Mammary epithelial cell (primary cell): ENCODE measurements at regions of chr14 and their contacts with region 1.

Region 1: GRCh38 chr14:85444635-85445034 is 85.3 kb upstream of the FLRT2 start:
- DNase-seq: no peak
- H3K4me3 ChIP-seq: no peak overlapping the region
- H3K27ac ChIP-seq: no peak overlapping the region
- H3K4me1 ChIP-seq: peaks cover 31% of the 10 kb centered on the region
- H3K27me3 ChIP-seq: no peaks in the 10 kb centered on the region
- CTCF ChIP-seq: no peak

Region 2: DNA sequence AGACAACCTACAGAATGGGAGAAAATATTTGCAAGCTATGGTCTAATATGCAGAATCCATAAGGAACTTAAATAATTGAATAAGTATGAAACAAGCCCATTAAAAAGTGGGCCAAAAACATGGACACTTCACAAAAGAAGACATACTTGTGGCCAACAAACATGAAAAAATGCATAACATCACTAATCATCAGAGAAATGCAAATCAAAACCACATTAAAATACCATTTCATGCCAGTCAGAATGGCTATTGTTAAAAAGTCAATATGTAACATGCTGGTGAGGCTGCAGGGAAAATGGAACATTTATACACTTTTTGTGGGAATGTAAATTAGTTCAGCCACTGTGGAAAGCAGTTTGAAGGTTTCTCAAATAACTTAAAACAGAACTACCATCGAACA is 860.1 kb before region 1 on chr14:
- CTCF ChIA-PET with region 1: no interaction called
- dilution Hi-C with region 1: no loop called
- in situ Hi-C with region 1: no loop called
- intact Hi-C with region 1: no loop called
- DNase-seq: no peak
- H3K4me3 ChIP-seq: no peak overlapping the region
- H3K27ac ChIP-seq: no peak overlapping the region
- H3K4me1 ChIP-seq: no peaks in the 10 kb centered on the region
- H3K27me3 ChIP-seq: no peaks in the 10 kb centered on the region
- CTCF ChIP-seq: no peak

Region 3: DNA sequence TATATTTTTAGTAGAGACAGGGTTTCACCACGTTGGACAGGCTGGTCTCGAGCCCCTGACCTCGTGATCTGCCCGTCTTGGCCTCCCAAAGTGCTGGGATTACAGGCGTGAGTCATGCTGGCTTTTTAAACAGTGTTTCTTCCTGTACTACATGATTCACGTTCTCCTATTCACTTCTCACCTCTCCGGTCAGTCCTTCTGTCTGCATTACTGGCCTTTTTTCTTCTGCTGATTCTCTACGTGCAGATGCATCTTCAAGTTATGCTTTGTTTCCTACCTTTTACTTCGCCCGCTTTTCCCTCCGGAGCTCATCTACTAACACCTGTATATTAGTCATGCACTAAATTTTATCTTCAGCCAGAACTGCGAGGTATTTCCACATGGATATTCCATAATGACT is 210.9 kb before region 1 on chr14:
- CTCF ChIA-PET with region 1: no interaction called
- dilution Hi-C with region 1: no loop called
- in situ Hi-C with region 1: no loop called
- intact Hi-C with region 1: loop called (anchors 2 kb)
- DNase-seq: peak; percentile 86
- H3K4me3 ChIP-seq: no peak overlapping the region
- H3K27ac ChIP-seq: peak overlapping the region; percentile 56
- H3K4me1 ChIP-seq: peaks cover 16% of the 10 kb centered on the region
- H3K27me3 ChIP-seq: no peaks in the 10 kb centered on the region
- CTCF ChIP-seq: no peak

Region 4: DNA sequence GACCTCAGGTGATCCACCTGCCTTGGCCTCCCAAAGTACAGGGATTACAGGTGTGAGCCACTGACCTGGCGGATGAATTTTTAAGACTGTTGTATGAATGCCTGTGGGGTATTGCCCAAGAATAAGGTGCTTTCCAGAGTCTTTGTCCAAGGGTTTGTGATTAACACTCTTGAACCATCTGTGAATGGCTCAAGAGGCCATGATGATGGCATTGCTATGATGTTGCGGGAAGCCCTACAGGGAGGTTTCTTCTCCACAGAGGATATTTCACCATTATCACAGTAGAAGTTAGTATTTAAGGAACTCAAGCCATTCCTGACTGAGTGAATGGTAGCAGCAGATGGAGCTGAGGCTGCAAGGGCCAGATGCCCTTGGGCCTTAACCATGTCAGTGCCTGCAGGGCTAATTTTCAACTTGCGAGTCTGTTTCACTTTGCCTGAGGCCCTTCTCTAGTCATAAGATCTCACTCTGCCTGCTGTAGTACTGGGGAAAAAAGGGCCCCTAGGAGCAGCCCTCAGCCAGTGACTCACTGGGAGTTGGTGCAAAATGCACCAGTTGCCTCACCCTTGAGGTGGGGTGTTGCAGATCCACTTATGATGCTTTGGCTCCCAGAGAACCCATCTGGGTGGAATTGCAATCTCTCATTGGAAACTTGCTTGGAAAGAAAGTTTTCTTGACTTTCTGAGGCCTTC is 23.3 kb before region 1 on chr14:
- CTCF ChIA-PET with region 1: no interaction called
- dilution Hi-C with region 1: no loop called
- in situ Hi-C with region 1: no loop called
- intact Hi-C with region 1: loop called (anchors 1 kb)
- DNase-seq: peak; percentile 90
- H3K4me3 ChIP-seq: no peak overlapping the region
- H3K27ac ChIP-seq: peak overlapping the region; percentile 72
- H3K4me1 ChIP-seq: peaks cover 41% of the 10 kb centered on the region
- H3K27me3 ChIP-seq: no peaks in the 10 kb centered on the region
- CTCF ChIP-seq: no peak